IMR-90 (cell line): ENCODE measurements at regions of chr4 and their contacts with region 1.

Region 1: DNA sequence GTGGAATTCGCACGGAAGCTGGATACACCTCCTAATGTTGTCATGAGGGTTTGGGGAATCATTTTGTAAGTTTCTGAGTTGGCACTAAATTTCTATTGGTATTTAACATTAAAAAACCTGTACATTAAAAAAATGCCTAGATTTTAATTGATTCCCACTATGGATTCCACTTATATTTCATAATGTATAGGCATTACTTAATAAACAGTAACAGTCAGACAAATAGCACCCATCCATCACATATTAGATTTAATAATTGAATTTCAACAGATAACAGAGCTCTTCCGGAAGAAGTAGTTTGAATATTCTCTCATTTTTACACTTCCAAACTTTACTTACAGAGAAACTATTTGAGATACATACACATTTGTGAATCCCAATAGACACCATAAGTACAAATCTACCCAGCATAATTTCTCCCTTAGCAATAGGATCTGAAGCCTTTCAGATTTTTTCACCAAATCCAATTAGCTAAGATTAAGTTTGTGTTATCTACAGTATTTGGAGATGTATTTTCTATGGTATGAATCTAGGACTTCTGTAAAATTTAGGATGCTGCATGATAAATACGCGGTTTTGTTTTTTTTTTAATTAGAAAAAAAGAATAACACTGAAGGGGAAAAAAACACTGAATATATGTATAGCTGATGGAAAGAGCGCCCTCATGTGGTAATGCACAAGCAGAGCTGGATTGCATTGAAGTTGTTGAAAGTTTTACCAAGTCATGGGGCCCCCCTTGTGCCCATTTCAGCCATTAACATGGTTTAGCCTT is 12.2 kb upstream of the ODAM start:
- DNase-seq: peak; percentile 48
- ATAC-seq: peak; percentile 53; the same call in 1 of the 2 replicates
- H3K4me3 ChIP-seq: no peak overlapping the region
- H3K27ac ChIP-seq: no peak overlapping the region
- H3K4me1 ChIP-seq: no peaks in the 10 kb centered on the region
- H3K27me3 ChIP-seq: no peaks in the 10 kb centered on the region
- CTCF ChIP-seq: peak; percentile 66
- POLR2A ChIP-seq: no peak
- RAD21 ChIP-seq: peak; percentile 44

Region 2: GRCh38 chr4:69689599-69689998 is 493.8 kb before region 1 on chr4:
- CTCF ChIA-PET with region 1: no interaction called
- POLR2A ChIA-PET with region 1: no interaction called
- dilution Hi-C with region 1: no loop called
- in situ Hi-C with region 1: loop called (anchors 10 kb)
- intact Hi-C with region 1: loop called (anchors 5 kb)
- DNase-seq: peak; percentile 26
- ATAC-seq: no peak; the same call in 1 of the 2 replicates
- H3K4me3 ChIP-seq: no peak overlapping the region
- H3K27ac ChIP-seq: no peak overlapping the region
- H3K4me1 ChIP-seq: no peaks in the 10 kb centered on the region
- H3K27me3 ChIP-seq: no peaks in the 10 kb centered on the region
- CTCF ChIP-seq: peak; percentile 60
- POLR2A ChIP-seq: no peak
- RAD21 ChIP-seq: peak; percentile 70

Region 3: GRCh38 chr4:69896530-69897116 is 286.7 kb before region 1 on chr4:
- CTCF ChIA-PET with region 1: no interaction called
- POLR2A ChIA-PET with region 1: no interaction called
- dilution Hi-C with region 1: no loop called
- in situ Hi-C with region 1: no loop called
- intact Hi-C with region 1: loop called (anchors 2 kb)
- DNase-seq: peak; percentile 3
- ATAC-seq: peak; percentile 49; the same call in 1 of the 2 replicates
- H3K4me3 ChIP-seq: no peak overlapping the region
- H3K27ac ChIP-seq: no peak overlapping the region
- H3K4me1 ChIP-seq: no peaks in the 10 kb centered on the region
- H3K27me3 ChIP-seq: no peaks in the 10 kb centered on the region
- CTCF ChIP-seq: peak; percentile 38
- POLR2A ChIP-seq: no peak
- RAD21 ChIP-seq: peak; percentile 29; the same call in 1 of the 2 replicates

Region 4: DNA sequence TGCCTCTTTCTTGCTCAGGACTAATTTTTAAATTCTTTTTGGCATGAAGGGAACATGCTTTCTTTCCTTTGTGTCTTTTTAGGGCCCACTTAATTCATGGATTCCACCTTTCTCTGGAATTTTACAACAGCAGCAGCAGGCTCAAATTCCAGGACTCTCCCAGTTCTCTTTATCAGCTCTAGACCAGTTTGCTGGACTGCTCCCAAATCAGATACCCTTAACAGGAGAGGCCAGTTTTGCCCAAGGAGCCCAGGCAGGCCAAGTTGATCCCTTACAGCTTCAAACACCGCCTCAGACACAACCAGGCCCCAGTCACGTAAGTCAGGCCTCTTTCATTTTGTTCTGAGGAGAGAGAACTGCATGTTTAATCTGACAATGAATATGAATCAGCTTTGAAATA is 14.5 kb after region 1 on chr4:
- CTCF ChIA-PET with region 1: interaction called, 15 read pairs
- POLR2A ChIA-PET with region 1: no interaction called
- dilution Hi-C with region 1: no loop called
- in situ Hi-C with region 1: no loop called
- intact Hi-C with region 1: no loop called
- DNase-seq: no peak
- ATAC-seq: no peak
- H3K4me3 ChIP-seq: no peak overlapping the region
- H3K27ac ChIP-seq: no peak overlapping the region
- H3K4me1 ChIP-seq: no peaks in the 10 kb centered on the region
- H3K27me3 ChIP-seq: no peaks in the 10 kb centered on the region
- CTCF ChIP-seq: no peak
- POLR2A ChIP-seq: no peak
- RAD21 ChIP-seq: no peak

Region 5: GRCh38 chr4:70505151-70505748 is 321.9 kb after region 1 on chr4:
- CTCF ChIA-PET with region 1: no interaction called
- POLR2A ChIA-PET with region 1: no interaction called
- dilution Hi-C with region 1: no loop called
- in situ Hi-C with region 1: no loop called
- intact Hi-C with region 1: loop called (anchors 2 kb)
- DNase-seq: peak; percentile 39
- ATAC-seq: peak; percentile 95
- H3K4me3 ChIP-seq: no peak overlapping the region
- H3K27ac ChIP-seq: no peak overlapping the region
- H3K4me1 ChIP-seq: no peaks in the 10 kb centered on the region
- H3K27me3 ChIP-seq: no peaks in the 10 kb centered on the region
- CTCF ChIP-seq: peak; percentile 82
- POLR2A ChIP-seq: 0 out of 2 replicates have a peak, but pooled peaks have one; percentile 21
- RAD21 ChIP-seq: peak; percentile 83

Region 6: DNA sequence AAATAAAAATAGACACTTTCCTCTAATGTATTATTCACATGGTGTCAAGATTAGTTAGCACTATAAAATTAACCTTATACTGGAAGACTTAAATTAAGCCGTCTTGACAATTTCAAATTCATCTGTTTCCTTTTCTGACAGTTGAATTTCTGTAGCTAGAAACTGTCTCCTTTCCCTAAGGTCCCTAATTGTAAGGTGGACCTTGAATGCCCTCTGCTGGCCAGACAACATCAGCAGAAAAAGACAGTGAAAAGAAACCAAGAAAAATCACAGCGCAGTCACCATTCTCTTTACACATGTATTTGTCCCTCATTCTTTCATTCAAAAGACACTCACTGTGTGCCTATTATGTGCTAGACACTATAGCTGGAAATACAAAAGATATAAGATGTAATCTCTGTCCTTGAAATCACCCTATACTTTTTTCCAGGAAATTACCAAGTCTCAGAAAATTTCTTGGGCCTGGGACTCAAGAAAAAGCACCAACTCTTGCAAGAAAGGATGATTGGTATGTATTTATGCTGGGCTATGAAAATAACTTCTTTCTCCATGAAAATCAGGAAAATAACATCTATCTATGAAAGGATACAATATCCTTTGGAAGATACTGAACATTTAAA is 376.0 kb after region 1 on chr4:
- CTCF ChIA-PET with region 1: no interaction called
- POLR2A ChIA-PET with region 1: no interaction called
- dilution Hi-C with region 1: no loop called
- in situ Hi-C with region 1: no loop called
- intact Hi-C with region 1: loop called (anchors 1 kb)
- DNase-seq: peak; percentile 34
- ATAC-seq: peak; percentile 89
- H3K4me3 ChIP-seq: no peak overlapping the region
- H3K27ac ChIP-seq: no peak overlapping the region
- H3K4me1 ChIP-seq: no peaks in the 10 kb centered on the region
- H3K27me3 ChIP-seq: no peaks in the 10 kb centered on the region
- CTCF ChIP-seq: peak; percentile 70
- POLR2A ChIP-seq: no peak
- RAD21 ChIP-seq: peak; percentile 60